PC-9 (cell line): ENCODE measurements at regions of chr10 and their contacts with region 1.

Region 1: GRCh38 chr10:124741281-124741921 is 2.8 kb downstream of the FAM53B start:
- DNase-seq: peak; percentile 42 to 65
- H3K4me3 ChIP-seq: no peak overlapping the region
- H3K27ac ChIP-seq: no peak overlapping the region
- H3K4me1 ChIP-seq: peaks cover 40% of the 10 kb centered on the region
- H3K27me3 ChIP-seq: no peaks in the 10 kb centered on the region
- CTCF ChIP-seq: peak; percentile 78

Region 2: GRCh38 chr10:123582084-123582989 is 1159.1 kb before region 1 on chr10:
- CTCF ChIA-PET with region 1: no interaction called
- POLR2A ChIA-PET with region 1: no interaction called
- intact Hi-C with region 1: loop called (anchors 5 kb)
- DNase-seq: peak; percentile 40 to 60
- H3K4me3 ChIP-seq: no peak overlapping the region
- H3K27ac ChIP-seq: no peak overlapping the region
- H3K4me1 ChIP-seq: no peaks in the 10 kb centered on the region
- H3K27me3 ChIP-seq: peaks cover 25% of the 10 kb centered on the region
- CTCF ChIP-seq: peak; percentile 76

Region 3: DNA sequence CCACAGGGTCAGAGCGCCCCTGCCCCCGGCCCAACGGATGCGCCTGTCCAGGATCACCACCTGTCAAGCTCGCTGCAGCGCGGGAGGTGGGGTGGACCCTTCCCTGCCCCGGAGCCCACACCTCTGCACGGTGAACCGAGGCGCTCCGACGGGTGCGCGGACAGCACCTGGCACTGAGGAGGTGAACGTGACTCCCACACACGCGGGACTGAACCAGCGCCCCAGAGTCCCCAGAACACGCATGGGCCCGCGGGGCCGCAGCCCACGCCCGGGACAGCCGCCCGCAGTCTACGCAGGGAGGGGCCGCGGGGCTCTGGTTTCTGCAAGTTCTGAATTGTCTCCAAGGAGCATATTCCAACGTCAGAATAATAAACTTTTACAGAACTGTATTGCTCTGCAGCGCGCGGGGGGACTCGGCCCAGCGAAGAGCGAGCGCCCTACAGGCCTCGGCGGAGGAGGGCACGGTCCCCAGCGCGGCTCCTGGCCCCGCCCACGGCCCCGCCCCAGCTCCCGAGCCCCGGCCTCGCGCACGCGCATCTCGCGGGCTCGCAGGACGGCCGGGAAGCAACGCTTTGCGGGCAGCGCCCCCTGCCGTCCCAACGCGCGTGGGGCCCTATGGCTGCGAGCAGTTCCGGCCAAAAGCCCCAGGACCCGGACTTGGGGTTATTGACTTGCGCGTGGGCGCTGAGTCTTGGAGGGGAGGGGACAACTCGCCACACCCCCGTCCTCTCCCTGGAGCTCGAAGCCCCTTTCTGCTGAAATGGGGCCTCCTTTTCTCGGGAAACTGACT is 352.4 kb before region 1 on chr10:
- CTCF ChIA-PET with region 1: interaction called, 8 read pairs
- POLR2A ChIA-PET with region 1: no interaction called
- intact Hi-C with region 1: loop called (anchors 5 kb)
- DNase-seq: peak; percentile 55 to 85
- H3K4me3 ChIP-seq: peak overlapping the region; percentile 46; the same call in 1 of the 2 replicates
- H3K27ac ChIP-seq: no peak overlapping the region
- H3K4me1 ChIP-seq: peaks cover 13% of the 10 kb centered on the region
- H3K27me3 ChIP-seq: no peaks in the 10 kb centered on the region
- CTCF ChIP-seq: peak; percentile 80

Region 4: GRCh38 chr10:124530215-124530665 is 211.2 kb before region 1 on chr10:
- CTCF ChIA-PET with region 1: interaction called, 4 read pairs
- POLR2A ChIA-PET with region 1: no interaction called
- intact Hi-C with region 1: loop called (anchors 1 kb)
- DNase-seq: peak; percentile 45 to 79
- H3K4me3 ChIP-seq: no peak overlapping the region
- H3K27ac ChIP-seq: no peak overlapping the region
- H3K4me1 ChIP-seq: no peaks in the 10 kb centered on the region
- H3K27me3 ChIP-seq: no peaks in the 10 kb centered on the region
- CTCF ChIP-seq: peak; percentile 77

Region 5: GRCh38 chr10:124626759-124627380 is 114.5 kb before region 1 on chr10:
- CTCF ChIA-PET with region 1: no interaction called
- POLR2A ChIA-PET with region 1: no interaction called
- intact Hi-C with region 1: loop called (anchors 5 kb)
- DNase-seq: peak; percentile 83 to 94
- H3K4me3 ChIP-seq: no peak overlapping the region
- H3K27ac ChIP-seq: peak overlapping the region; percentile 55
- H3K4me1 ChIP-seq: peaks cover 29% of the 10 kb centered on the region
- H3K27me3 ChIP-seq: no peaks in the 10 kb centered on the region
- CTCF ChIP-seq: no peak